ENCODE measurements at regions of chr17 and their contacts with region 1.

Region 1: GRCh38 chr17:39581759-39582460 is 25.8 kb downstream of the NEUROD2 start:
- H3K4me3 ChIP-seq: no peak overlapping the region
- H3K27ac ChIP-seq: no peak overlapping the region
- H3K4me1 ChIP-seq: no peaks in the 10 kb centered on the region
- CTCF ChIP-seq: no peak

Region 2: GRCh38 chr17:39612291-39612894 is 30.5 kb after region 1 on chr17:
- CTCF ChIA-PET with region 1: no interaction called
- POLR2A ChIA-PET with region 1: interaction called, 11 read pairs
- H3K4me3 ChIP-seq: no peak overlapping the region
- H3K27ac ChIP-seq: no peak overlapping the region
- H3K4me1 ChIP-seq: peaks cover 10% of the 10 kb centered on the region
- CTCF ChIP-seq: no peak

Measured in HEK293 (cell line).